ENCODE measurements at regions of chr1 and their contacts with region 1.

Region 1: GRCh38 chr1:1873186-1873585 is 17.7 kb downstream of the GNB1 start:
- DNase-seq: no peak
- ATAC-seq: no peak
- H3K4me3 Mint-ChIP-seq: no peak overlapping the region
- H3K27ac Mint-ChIP-seq: no peak overlapping the region
- H3K4me1 Mint-ChIP-seq: peaks cover 71% of the 10 kb centered on the region
- H3K27me3 Mint-ChIP-seq: no peaks in the 10 kb centered on the region

Region 2: GRCh38 chr1:1665800-1666251 is 207.4 kb before region 1 on chr1:
- CTCF ChIA-PET with region 1: no interaction called
- POLR2A ChIA-PET with region 1: no interaction called
- intact Hi-C with region 1: no loop called
- DNase-seq: peak; percentile 64
- ATAC-seq: peak; percentile 57
- H3K4me3 Mint-ChIP-seq: no peak overlapping the region
- H3K27ac Mint-ChIP-seq: no peak overlapping the region
- H3K4me1 Mint-ChIP-seq: peaks cover 2% of the 10 kb centered on the region
- H3K27me3 Mint-ChIP-seq: no peaks in the 10 kb centered on the region

Region 3: GRCh38 chr1:1752665-1753606 is 120.2 kb before region 1 on chr1:
- CTCF ChIA-PET with region 1: no interaction called
- POLR2A ChIA-PET with region 1: no interaction called
- intact Hi-C with region 1: no loop called
- DNase-seq: no peak
- ATAC-seq: no peak
- H3K4me3 Mint-ChIP-seq: no peak overlapping the region
- H3K27ac Mint-ChIP-seq: no peak overlapping the region
- H3K4me1 Mint-ChIP-seq: peaks cover 3% of the 10 kb centered on the region
- H3K27me3 Mint-ChIP-seq: no peaks in the 10 kb centered on the region

Region 4: GRCh38 chr1:1826356-1827088 is 46.7 kb before region 1 on chr1:
- CTCF ChIA-PET with region 1: no interaction called
- POLR2A ChIA-PET with region 1: no interaction called
- intact Hi-C with region 1: loop called (anchors 5 kb)
- DNase-seq: no peak
- ATAC-seq: no peak
- H3K4me3 Mint-ChIP-seq: no peak overlapping the region
- H3K27ac Mint-ChIP-seq: peak overlapping the region; percentile 30
- H3K4me1 Mint-ChIP-seq: peaks cover 49% of the 10 kb centered on the region
- H3K27me3 Mint-ChIP-seq: no peaks in the 10 kb centered on the region

Region 5: GRCh38 chr1:1841575-1841995 is 31.6 kb before region 1 on chr1:
- CTCF ChIA-PET with region 1: no interaction called
- POLR2A ChIA-PET with region 1: no interaction called
- intact Hi-C with region 1: loop called in 1 of 2 experiments (anchors 5 kb)
- DNase-seq: no peak
- ATAC-seq: peak; percentile 80
- H3K4me3 Mint-ChIP-seq: peak overlapping the region; percentile 37
- H3K27ac Mint-ChIP-seq: peak overlapping the region; percentile 94
- H3K4me1 Mint-ChIP-seq: peaks cover 46% of the 10 kb centered on the region
- H3K27me3 Mint-ChIP-seq: no peaks in the 10 kb centered on the region

Region 6: DNA sequence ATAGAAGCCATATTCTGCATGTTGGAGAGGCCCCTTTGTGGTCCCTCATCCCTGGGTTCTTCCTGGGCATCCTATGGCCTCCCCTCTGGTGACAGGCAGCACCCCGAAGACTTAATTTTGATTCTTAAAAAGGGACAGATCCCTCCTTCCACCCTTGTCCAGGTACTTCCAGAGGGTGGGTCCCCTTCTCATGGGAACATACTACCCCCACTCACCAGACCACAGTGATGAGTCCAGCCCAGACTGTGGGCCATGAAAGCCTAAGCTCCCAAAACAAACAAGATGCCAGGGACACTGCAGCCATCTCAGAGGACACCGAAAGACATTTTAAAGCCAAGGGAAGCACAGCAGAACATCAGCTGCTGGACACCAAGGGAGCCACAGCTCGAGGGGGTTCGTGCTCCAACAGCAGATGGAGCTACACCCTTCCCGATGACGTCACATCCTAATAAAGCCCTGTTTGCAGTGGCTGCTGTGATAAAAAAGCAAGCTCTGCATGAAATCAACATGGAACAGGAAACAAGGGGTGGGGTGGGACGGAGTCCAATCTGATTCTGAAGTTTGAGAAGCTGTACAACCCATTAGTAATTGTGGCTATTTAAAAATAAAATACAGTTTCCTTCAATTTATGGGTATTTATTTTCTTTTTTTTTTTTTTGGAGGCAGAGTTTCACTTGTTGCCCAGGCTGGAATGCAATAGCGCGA is 14.7 kb before region 1 on chr1:
- CTCF ChIA-PET with region 1: interaction called, 8 read pairs
- POLR2A ChIA-PET with region 1: no interaction called
- intact Hi-C with region 1: loop called in 1 of 2 experiments (anchors 2 kb)
- DNase-seq: peak; percentile 24
- ATAC-seq: no peak
- H3K4me3 Mint-ChIP-seq: no peak overlapping the region
- H3K27ac Mint-ChIP-seq: peak overlapping the region; percentile 23
- H3K4me1 Mint-ChIP-seq: peaks cover 71% of the 10 kb centered on the region
- H3K27me3 Mint-ChIP-seq: no peaks in the 10 kb centered on the region